ENCODE measurements at regions of chr11 and their contacts with region 1.

Region 1: GRCh38 chr11:17207317-17208258 is at the start of gene PIK3C2A:
- DNase-seq: peak; percentile 97 to 98
- H3K4me3 ChIP-seq: peak within 1 kb of the TSS; percentile 99
- H3K4me3 Mint-ChIP-seq: peak within 1 kb of the TSS; percentile 98
- H3K27ac Mint-ChIP-seq: peak within 1 kb of the TSS; percentile 100
- H3K4me1 ChIP-seq: peaks cover 23% of the 10 kb centered on the region
- H3K4me1 Mint-ChIP-seq: peaks cover 34% of the 10 kb centered on the region
- H3K27me3 ChIP-seq: no peaks in the 10 kb centered on the region
- H3K27me3 Mint-ChIP-seq: no peaks in the 10 kb centered on the region
- CTCF ChIP-seq: no peak
- total RNA-seq, gene PIK3C2A: 138 and 140 TPM in 2 replicates

Region 2: DNA sequence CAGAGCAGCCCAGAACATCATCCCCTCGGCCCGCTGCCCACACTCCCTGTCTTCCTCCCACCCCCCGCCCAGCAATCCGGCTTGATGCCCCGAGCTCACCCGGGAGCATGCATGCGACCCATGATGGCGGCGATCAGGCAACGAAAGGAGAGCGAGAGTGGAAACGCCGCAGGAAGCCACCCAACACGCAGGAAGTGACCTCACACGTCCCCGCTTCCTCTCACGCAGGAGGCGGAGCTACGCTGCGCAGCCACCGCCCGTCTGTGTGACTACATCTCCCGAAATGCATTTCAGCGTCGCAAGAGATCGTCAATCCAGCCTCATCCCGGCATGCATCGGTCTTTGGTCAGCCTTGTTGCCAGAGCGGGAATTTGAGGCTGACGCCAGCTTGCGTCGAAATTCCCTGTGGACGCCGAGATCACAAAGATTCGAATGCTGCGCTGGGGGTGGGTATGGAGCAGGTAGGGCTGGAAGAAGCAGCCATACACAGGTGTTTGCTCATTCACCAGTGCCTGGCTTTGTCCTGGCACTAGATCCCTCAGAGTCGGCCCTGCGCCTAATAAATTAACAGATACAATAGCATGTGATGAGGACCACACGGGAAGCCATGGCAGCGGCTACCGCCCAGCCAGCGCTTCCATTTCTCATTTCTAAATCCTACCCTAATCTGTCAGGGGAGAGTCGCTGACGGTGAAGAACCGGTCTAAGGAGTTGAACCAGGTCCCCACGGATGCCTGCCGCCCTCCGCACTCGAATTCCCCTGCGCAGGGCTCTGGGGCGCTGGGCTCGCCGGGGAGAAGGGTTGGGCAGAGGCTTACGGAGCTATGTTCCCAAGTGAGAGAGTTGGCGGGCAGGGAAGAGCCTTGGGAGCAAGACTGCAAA is 129.8 kb before region 1 on chr11 and contains the start of gene RPS13:
- CTCF ChIA-PET with region 1: no interaction called
- POLR2A ChIA-PET with region 1: interaction called, 13 read pairs
- intact Hi-C with region 1: no loop called
- DNase-seq: peak; percentile 97 to 99
- H3K4me3 ChIP-seq: peak within 1 kb of the TSS; percentile 84
- H3K4me3 Mint-ChIP-seq: peak within 1 kb of the TSS; percentile 96
- H3K27ac Mint-ChIP-seq: peak within 1 kb of the TSS; percentile 99
- H3K4me1 ChIP-seq: peaks cover 24% of the 10 kb centered on the region
- H3K4me1 Mint-ChIP-seq: peaks cover 7% of the 10 kb centered on the region
- H3K27me3 ChIP-seq: no peaks in the 10 kb centered on the region
- H3K27me3 Mint-ChIP-seq: no peaks in the 10 kb centered on the region
- CTCF ChIP-seq: no peak
- total RNA-seq, gene RPS13: 1,349 and 1,456 TPM in 2 replicates

Region 3: DNA sequence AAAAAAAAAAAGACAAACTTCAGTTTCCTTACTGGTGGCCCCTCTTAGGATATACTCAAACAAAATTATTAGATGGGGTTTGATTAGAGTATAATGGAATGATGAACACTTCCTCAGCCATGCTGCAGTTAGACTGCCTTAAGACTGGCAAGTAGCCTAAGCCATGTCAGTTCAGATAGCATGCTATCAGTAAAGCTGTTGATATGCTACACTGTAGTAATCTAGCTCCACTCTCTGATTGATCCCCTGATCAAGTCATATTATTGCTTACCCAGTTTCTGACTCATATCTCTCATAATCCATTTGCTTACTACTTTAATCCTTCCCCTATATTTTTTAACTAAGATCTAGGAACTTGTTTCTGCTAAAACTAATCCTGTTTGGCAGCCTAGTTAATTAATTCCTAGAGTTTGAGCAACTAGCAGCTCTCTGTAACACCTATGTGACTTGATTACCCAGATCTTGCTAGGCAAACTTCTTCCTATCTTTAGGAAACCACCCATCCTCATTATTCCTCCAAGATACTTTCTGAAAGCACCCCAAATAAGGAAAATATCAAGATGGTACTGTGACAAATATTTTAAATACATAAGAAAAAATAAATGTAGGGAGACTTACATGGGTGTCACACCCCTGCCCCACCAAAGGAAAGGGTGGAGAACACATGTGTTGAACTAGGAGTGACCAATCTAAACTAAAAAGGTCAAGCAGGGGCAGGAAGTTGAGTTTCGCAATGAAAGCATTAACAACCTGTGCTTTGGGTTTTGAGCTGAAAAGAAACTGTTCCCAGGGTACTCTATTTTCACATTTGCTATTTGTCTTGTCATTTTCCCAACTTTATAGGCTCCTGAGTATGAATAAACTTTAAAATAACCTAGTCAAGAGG is 43.0 kb before region 1 on chr11:
- CTCF ChIA-PET with region 1: interaction called, 5 read pairs
- POLR2A ChIA-PET with region 1: interaction called, 4 read pairs
- intact Hi-C with region 1: loop called (anchors 2 kb)
- DNase-seq: peak in 1 of 2 experiments; percentile 35
- H3K4me3 ChIP-seq: no peak overlapping the region
- H3K4me3 Mint-ChIP-seq: no peak overlapping the region
- H3K27ac Mint-ChIP-seq: peak overlapping the region; percentile 51
- H3K4me1 ChIP-seq: peaks cover 12% of the 10 kb centered on the region
- H3K4me1 Mint-ChIP-seq: peaks cover 51% of the 10 kb centered on the region
- H3K27me3 ChIP-seq: no peaks in the 10 kb centered on the region
- H3K27me3 Mint-ChIP-seq: no peaks in the 10 kb centered on the region
- CTCF ChIP-seq: no peak

Region 4: DNA sequence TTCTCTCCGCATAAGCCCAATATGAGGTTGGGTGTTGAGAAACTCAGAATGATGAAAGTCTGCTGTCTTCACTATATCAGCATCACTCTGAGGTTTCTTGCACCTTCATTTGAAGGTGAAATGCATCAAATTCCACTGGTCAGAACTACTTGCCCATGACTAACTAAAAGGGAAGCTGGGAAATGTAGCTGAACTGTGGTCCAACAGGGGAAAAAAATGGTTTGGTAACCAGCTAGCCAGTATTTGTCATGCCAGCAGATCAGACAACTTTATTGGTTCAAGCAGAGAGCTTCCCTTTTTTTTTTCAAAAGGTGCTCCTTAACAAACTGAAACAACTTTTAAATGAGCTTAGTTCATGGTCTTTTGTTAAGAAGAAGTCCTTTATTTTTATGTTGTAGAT is 14.4 kb after region 1 on chr11:
- CTCF ChIA-PET with region 1: no interaction called
- POLR2A ChIA-PET with region 1: interaction called, 20 read pairs
- intact Hi-C with region 1: no loop called
- DNase-seq: no peak
- H3K4me3 ChIP-seq: no peak overlapping the region
- H3K4me3 Mint-ChIP-seq: no peak overlapping the region
- H3K27ac Mint-ChIP-seq: no peak overlapping the region
- H3K4me1 ChIP-seq: peaks cover 17% of the 10 kb centered on the region
- H3K4me1 Mint-ChIP-seq: peaks cover 19% of the 10 kb centered on the region
- H3K27me3 ChIP-seq: no peaks in the 10 kb centered on the region
- H3K27me3 Mint-ChIP-seq: no peaks in the 10 kb centered on the region
- CTCF ChIP-seq: no peak

Region 5: GRCh38 chr11:17244046-17244445 is 36.5 kb after region 1 on chr11:
- CTCF ChIA-PET with region 1: no interaction called
- POLR2A ChIA-PET with region 1: no interaction called
- intact Hi-C with region 1: no loop called
- DNase-seq: no peak
- H3K4me3 ChIP-seq: no peak overlapping the region
- H3K4me3 Mint-ChIP-seq: no peak overlapping the region
- H3K27ac Mint-ChIP-seq: no peak overlapping the region
- H3K4me1 ChIP-seq: no peaks in the 10 kb centered on the region
- H3K4me1 Mint-ChIP-seq: no peaks in the 10 kb centered on the region
- H3K27me3 ChIP-seq: no peaks in the 10 kb centered on the region
- H3K27me3 Mint-ChIP-seq: no peaks in the 10 kb centered on the region
- CTCF ChIP-seq: no peak

Region 6: DNA sequence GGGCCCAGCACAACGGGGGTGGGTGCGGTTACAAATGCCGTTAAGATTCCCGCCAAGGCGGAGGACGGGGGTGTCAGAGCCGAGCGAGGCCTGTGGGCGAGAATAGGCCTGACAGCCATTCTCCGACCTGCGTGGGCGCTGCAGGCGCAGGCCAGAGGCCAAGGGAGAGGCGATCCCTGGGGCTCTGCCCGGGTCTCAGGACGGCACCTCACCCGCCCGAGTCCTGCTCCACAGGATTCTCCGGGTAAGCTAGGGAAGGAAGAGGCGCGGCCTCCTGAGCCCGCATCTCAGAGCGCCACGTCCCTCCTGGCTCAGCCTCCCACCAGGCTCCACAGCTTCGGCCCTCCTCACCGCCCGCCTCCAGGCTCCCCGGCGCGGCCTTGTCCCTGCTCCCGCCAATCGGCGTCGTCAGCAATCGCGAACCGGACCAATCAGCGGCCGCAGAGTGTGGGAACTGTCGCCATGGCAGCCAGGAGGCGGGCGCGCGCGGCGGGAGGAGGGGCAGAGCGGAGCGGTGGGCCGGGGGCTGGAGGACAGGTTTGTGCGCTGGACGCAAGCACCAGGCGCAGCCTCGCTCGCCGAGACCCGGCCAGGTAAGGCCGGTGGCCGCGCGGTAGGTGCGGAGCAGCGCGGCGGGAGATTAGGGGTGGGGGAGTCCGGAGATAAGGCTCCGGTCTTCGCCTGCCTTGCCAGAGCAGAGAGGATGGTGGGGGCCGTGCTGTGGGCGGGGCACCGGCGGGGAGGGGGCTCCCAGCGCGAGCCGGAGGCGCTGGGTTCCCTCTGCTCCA is 68.8 kb after region 1 on chr11 and contains the start of gene NUCB2:
- CTCF ChIA-PET with region 1: no interaction called
- POLR2A ChIA-PET with region 1: interaction called, 11 read pairs
- intact Hi-C with region 1: loop called (anchors 2 kb)
- DNase-seq: peak; percentile 98 to 99
- H3K4me3 ChIP-seq: peak within 1 kb of the TSS; percentile 86
- H3K4me3 Mint-ChIP-seq: peak within 1 kb of the TSS; percentile 97
- H3K27ac Mint-ChIP-seq: peak within 1 kb of the TSS; percentile 21
- H3K4me1 ChIP-seq: peaks cover 14% of the 10 kb centered on the region; the same call in 1 of the 2 replicates
- H3K4me1 Mint-ChIP-seq: peaks cover 7% of the 10 kb centered on the region
- H3K27me3 ChIP-seq: no peaks in the 10 kb centered on the region
- H3K27me3 Mint-ChIP-seq: no peaks in the 10 kb centered on the region
- CTCF ChIP-seq: no peak
- total RNA-seq, gene NUCB2: 54.5 and 66.6 TPM in 2 replicates

Region 7: GRCh38 chr11:17352950-17353820 is 145.6 kb after region 1 on chr11:
- CTCF ChIA-PET with region 1: interaction called, 5 read pairs
- POLR2A ChIA-PET with region 1: interaction called, 4 read pairs
- intact Hi-C with region 1: loop called (anchors 1 kb)
- DNase-seq: peak; percentile 87 to 91
- H3K4me3 ChIP-seq: peak overlapping the region; percentile 61
- H3K4me3 Mint-ChIP-seq: peak overlapping the region; percentile 91
- H3K27ac Mint-ChIP-seq: peak overlapping the region; percentile 72
- H3K4me1 ChIP-seq: peaks cover 4% of the 10 kb centered on the region
- H3K4me1 Mint-ChIP-seq: peaks cover 14% of the 10 kb centered on the region
- H3K27me3 ChIP-seq: no peaks in the 10 kb centered on the region
- H3K27me3 Mint-ChIP-seq: no peaks in the 10 kb centered on the region
- CTCF ChIP-seq: no peak

Measured in Caco-2 (cell line).